ENCODE measurements at regions of chr15 and their contacts with region 1.

Region 1: GRCh38 chr15:67863442-67863987 is 23.7 kb upstream of the RNU6-1 start:
- DNase-seq: peak; percentile 49 to 85 (median 64)
- ATAC-seq: peak; percentile 99
- H3K4me3 ChIP-seq: peak overlapping the region; percentile 42
- H3K4me3 Mint-ChIP-seq: no peak overlapping the region
- H3K27ac ChIP-seq: no peak overlapping the region
- H3K27ac Mint-ChIP-seq: no peak overlapping the region
- H3K4me1 ChIP-seq: peaks cover 10% of the 10 kb centered on the region
- H3K4me1 Mint-ChIP-seq: no peaks in the 10 kb centered on the region
- H3K27me3 ChIP-seq: no peaks in the 10 kb centered on the region
- H3K27me3 Mint-ChIP-seq: peaks cover 8% of the 10 kb centered on the region
- CTCF ChIP-seq: peak; percentile 95

Region 2: GRCh38 chr15:68154923-68155559 is 291.5 kb after region 1 on chr15:
- CTCF ChIA-PET with region 1: interaction called, 9 read pairs
- POLR2A ChIA-PET with region 1: interaction called, 3 read pairs
- intact Hi-C with region 1: loop called (anchors 1 kb)
- DNase-seq: peak in 7 of 14 experiments; percentile 3 to 51 (median 28)
- ATAC-seq: peak; percentile 37
- H3K4me3 ChIP-seq: no peak overlapping the region
- H3K4me3 Mint-ChIP-seq: no peak overlapping the region
- H3K27ac ChIP-seq: no peak overlapping the region
- H3K27ac Mint-ChIP-seq: no peak overlapping the region
- H3K4me1 ChIP-seq: no peaks in the 10 kb centered on the region
- H3K4me1 Mint-ChIP-seq: peaks cover 4% of the 10 kb centered on the region
- H3K27me3 ChIP-seq: no peaks in the 10 kb centered on the region
- H3K27me3 Mint-ChIP-seq: no peaks in the 10 kb centered on the region
- CTCF ChIP-seq: peak; percentile 45

Region 3: DNA sequence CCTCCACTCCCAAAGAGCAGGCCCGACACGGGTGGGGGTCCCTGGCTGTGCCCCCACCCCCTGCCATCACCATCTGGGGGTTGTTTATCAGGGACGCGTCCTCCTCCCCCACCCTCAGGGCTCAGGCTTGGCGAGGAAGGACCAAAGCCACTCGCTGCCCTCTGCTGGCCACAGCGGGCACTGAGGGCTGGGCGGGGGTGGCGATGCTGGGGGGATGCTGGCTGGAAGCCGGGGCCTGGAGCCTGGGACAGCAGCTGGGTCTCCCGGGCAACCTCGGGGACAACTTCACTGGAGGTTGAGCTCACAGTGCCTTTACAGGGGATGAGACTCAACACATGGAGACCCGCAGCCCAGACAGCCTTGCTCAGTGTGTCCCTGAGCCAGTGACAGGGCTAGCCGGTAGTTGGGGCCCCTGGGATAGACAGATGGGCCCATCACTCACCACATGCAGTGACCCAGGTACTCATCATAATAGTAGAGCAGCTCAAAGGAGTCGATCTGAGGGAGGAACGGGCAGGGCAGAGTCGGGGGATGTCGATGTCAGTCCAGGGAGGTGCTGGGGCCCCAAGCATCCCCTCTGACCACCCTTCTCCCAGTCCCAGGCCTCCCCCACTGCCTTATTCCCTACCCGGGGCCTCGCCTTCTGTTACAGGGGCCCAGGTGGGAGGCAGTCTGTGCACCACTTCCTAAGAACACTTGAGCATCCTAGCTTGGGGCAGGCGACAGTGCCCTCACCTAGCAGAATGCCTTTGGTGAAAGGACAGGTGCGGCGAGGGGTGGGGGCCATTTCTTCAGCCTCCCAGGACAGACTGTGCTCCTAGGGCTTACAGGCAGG is 347.5 kb after region 1 on chr15:
- CTCF ChIA-PET with region 1: no interaction called
- POLR2A ChIA-PET with region 1: no interaction called
- intact Hi-C with region 1: loop called (anchors 1 to 2 kb)
- DNase-seq: peak; percentile 19 to 67 (median 42)
- ATAC-seq: peak; percentile 58
- H3K4me3 ChIP-seq: no peak overlapping the region
- H3K4me3 Mint-ChIP-seq: no peak overlapping the region
- H3K27ac ChIP-seq: no peak overlapping the region
- H3K27ac Mint-ChIP-seq: no peak overlapping the region
- H3K4me1 ChIP-seq: peaks cover 43% of the 10 kb centered on the region
- H3K4me1 Mint-ChIP-seq: peaks cover 22% of the 10 kb centered on the region
- H3K27me3 ChIP-seq: no peaks in the 10 kb centered on the region
- H3K27me3 Mint-ChIP-seq: no peaks in the 10 kb centered on the region
- CTCF ChIP-seq: peak; percentile 63

Measured in CD4-positive, alpha-beta T cell (primary cell).